ENCODE measurements at regions of chr15 and their contacts with region 1.

Region 1: DNA sequence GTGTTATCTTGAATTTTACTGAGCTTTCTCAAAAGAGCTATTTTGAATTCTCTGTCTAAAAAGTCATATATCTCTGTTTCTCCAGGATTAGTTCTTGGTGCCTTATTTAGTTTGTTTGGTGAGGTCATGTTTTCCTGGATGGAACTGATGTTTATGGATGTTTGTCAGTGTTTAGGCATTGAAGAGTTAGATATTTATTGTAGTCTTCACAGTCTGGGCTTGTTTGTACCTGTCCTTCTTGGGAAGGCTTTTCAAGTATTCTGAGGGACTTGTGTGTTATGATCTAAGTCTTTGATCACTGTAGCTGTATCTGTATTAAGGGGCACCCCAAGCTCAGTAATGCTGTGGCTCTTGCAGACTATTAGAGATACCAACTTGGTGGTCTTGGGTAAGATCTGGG is 10.6 kb upstream of the RAD51 start:
- DNase-seq: no peak
- ATAC-seq: no peak
- H3K4me3 ChIP-seq: no peak overlapping the region
- H3K27ac ChIP-seq: no peak overlapping the region
- H3K4me1 ChIP-seq: no peaks in the 10 kb centered on the region
- H3K27me3 ChIP-seq: no peaks in the 10 kb centered on the region
- CTCF ChIP-seq: no peak
- EP300 ChIP-seq: no peak
- POLR2A ChIP-seq: no peak
- RAD21 ChIP-seq: no peak

Region 2: GRCh38 chr15:40694688-40695468 is 10.5 kb after region 1 on chr15 and contains the start of gene RAD51:
- CTCF ChIA-PET with region 1: no interaction called
- POLR2A ChIA-PET with region 1: interaction called, 13 read pairs
- in situ Hi-C with region 1: no loop called
- intact Hi-C with region 1: no loop called
- DNase-seq: peak; percentile 89 to 96 (median 91)
- ATAC-seq: peak; percentile 94
- H3K4me3 ChIP-seq: peak within 1 kb of the TSS; percentile 54
- H3K27ac ChIP-seq: peak within 1 kb of the TSS; percentile 90
- H3K4me1 ChIP-seq: peaks cover 5 to 14% of the 10 kb centered on the region in 2 experiments; a peak in 4 of 5 replicates
- H3K27me3 ChIP-seq: no peaks in the 10 kb centered on the region
- CTCF ChIP-seq: 0 out of 6 replicates have a peak, but pooled peaks of 1 of the 3 experiments have one; percentile 5
- EP300 ChIP-seq: no peak; the same call in 1 of the 2 replicates
- POLR2A ChIP-seq: peak; percentile 95
- RAD21 ChIP-seq: no peak
- polyA plus RNA-seq, gene RAD51: 16.0 to 16.6 TPM

Region 3: DNA sequence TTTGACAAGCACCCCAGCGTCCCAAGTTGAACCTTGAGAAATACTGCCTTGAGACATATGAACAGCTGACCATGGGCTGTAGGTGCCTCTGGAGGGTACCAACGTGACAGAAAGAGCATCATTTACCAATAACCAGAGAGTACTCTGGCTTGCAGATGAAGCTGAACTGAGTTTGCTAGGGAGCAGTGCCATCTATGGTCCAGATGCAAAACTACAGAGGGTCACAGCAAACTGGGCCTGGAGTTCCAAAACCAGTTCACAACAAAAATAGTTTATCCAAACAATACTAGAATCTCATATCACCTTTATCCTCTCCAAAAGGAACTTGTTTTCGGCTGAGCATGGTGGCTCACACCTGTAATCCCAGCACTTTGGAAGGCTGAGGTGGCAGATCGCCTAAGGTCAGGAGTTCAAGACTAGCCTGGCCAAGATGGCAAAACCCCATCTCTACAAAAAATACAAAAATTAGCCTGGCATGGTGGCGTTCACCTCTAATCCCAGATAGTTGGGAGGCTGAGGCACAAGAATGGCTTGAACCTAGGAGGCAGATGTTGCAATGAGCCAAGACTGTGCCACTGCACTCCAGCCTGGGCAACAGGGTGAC is 338.2 kb after region 1 on chr15:
- CTCF ChIA-PET with region 1: no interaction called
- POLR2A ChIA-PET with region 1: no interaction called
- in situ Hi-C with region 1: no loop called
- intact Hi-C with region 1: no loop called
- DNase-seq: peak; percentile 30 to 46 (median 40)
- ATAC-seq: peak; percentile 82
- H3K4me3 ChIP-seq: no peak overlapping the region
- H3K27ac ChIP-seq: no peak overlapping the region
- H3K4me1 ChIP-seq: no peaks in the 10 kb centered on the region
- H3K27me3 ChIP-seq: no peaks in the 10 kb centered on the region
- CTCF ChIP-seq: peak; percentile 65 to 72 (median 66)
- EP300 ChIP-seq: no peak
- POLR2A ChIP-seq: no peak
- RAD21 ChIP-seq: peak; percentile 52 to 63

Measured in K562 (cell line).